CD4-positive, alpha-beta T cell (primary cell): ENCODE measurements at regions of chr17 and their contacts with region 1.

Region 1: DNA sequence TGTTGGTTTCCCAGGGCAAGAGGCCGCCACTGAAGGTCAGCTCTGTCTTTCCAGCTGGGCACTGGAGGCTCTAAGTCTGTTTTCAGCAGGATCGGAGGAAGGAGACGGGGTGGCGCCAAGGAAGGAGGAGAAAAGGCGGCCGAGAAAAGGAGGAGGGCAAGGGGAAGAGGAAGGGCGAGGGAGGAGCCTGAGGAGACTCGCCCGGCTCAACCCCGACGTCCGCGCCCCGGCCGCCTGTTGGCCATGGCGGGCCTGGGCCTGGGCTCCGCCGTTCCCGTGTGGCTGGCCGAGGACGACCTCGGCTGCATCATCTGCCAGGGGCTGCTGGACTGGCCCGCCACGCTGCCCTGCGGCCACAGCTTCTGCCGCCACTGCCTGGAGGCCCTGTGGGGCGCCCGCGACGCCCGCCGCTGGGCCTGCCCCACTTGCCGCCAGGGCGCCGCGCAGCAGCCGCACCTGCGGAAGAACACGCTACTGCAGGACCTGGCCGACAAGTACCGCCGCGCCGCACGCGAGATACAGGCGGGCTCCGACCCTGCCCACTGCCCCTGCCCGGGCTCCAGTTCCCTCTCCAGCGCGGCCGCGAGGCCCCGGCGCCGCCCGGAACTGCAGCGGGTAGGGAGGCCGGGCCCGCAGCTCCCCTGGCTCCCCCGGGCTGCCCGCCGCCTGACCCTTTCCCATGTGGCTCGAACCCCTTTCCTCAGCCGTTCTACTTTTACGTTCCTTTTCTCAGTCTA is at the start of gene RNF135:
- DNase-seq: peak; percentile 14 to 80 (median 46)
- ATAC-seq: peak; percentile 54
- H3K4me3 ChIP-seq: peak within 1 kb of the TSS; percentile 81
- H3K4me3 Mint-ChIP-seq: peak within 1 kb of the TSS; percentile 97
- H3K27ac ChIP-seq: peak within 1 kb of the TSS in 1 of 2 donors; percentile 7
- H3K27ac Mint-ChIP-seq: peak within 1 kb of the TSS; percentile 88
- H3K4me1 ChIP-seq: peaks cover 14% of the 10 kb centered on the region
- H3K4me1 Mint-ChIP-seq: peaks cover 26% of the 10 kb centered on the region
- H3K27me3 ChIP-seq: no peaks in the 10 kb centered on the region
- H3K27me3 Mint-ChIP-seq: no peaks in the 10 kb centered on the region
- CTCF ChIP-seq: no peak
- total RNA-seq, gene RNF135: 1.5 to 1.8 TPM

Region 2: DNA sequence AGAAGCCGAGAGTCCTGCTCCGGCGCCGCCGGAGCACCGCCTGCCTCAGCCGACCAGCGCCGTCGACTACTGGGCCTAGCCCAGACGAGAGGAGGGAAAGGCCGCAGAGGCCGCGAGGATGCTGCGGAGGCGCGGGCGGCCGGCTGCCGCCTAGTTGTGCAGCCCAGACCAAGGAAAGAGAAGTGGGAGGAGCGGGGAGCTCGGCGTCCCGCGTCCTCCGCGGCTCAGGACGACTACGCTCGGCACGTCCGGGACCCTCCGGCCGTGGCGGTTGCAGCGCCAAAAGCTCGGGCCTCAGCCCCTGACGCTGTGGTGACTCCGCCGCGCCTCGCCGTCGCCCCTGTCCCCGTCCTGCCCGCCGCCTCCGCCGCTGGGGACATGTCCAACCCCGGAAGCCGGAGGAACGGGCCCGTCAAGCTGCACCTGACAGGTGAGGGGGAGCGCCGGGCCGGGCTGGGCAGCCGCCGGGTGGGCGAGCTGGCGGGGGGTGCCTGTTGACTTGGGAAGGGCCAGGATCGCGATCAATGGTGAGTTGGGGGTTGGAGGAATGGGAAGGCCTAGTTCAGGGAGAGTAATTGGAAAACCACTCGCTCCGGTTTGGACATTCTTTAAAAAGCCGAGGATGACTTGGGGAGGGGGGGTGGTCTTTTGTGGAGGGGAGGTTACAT is 37.5 kb after region 1 on chr17:
- CTCF ChIA-PET with region 1: no interaction called
- POLR2A ChIA-PET with region 1: interaction called, 22 read pairs
- intact Hi-C with region 1: no loop called
- DNase-seq: peak; percentile 15 to 76 (median 49)
- ATAC-seq: peak; percentile 71
- H3K4me3 ChIP-seq: peak overlapping the region; percentile 74
- H3K4me3 Mint-ChIP-seq: peak overlapping the region; percentile 98
- H3K27ac ChIP-seq: peak overlapping the region in 1 of 2 donors; percentile 44
- H3K27ac Mint-ChIP-seq: peak overlapping the region; percentile 93
- H3K4me1 ChIP-seq: peaks cover 12% of the 10 kb centered on the region
- H3K4me1 Mint-ChIP-seq: peaks cover 17% of the 10 kb centered on the region
- H3K27me3 ChIP-seq: no peaks in the 10 kb centered on the region
- H3K27me3 Mint-ChIP-seq: no peaks in the 10 kb centered on the region
- CTCF ChIP-seq: no peak